T-cell (primary cell): ENCODE measurements at regions of chr2 and their contacts with region 1.

Region 1: DNA sequence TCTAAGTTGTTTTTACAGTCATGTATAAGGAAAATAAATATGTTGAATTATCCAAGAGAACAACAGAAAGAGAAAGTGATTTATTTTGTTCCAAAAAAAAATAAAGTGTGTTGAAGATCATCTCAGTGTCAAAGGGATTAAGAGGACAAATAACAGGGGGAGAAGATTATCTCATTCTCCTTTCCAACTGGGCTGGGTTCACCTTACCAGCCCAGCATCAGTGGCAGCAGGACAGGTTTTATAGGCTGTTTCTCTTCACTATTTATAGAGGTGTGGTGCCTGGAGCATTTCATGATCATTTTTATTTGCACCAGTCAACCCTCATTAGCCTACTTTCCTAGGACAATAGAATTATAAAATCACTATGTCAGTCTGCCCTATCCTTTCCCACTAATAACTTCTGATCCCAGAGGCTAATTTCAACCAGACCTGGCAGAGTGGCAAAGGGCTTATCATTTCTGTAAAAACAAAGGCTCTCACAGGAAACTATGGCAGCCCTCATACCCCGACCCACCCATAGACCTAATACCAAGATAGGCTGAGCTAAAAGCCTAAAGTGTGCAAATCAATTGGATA is 243.4 kb upstream of the TMEFF2 start:
- DNase-seq: no peak
- ATAC-seq: no peak
- H3K4me3 ChIP-seq: no peak overlapping the region
- H3K4me3 Mint-ChIP-seq: no peak overlapping the region
- H3K27ac ChIP-seq: no peak overlapping the region
- H3K27ac Mint-ChIP-seq: no peak overlapping the region
- H3K4me1 ChIP-seq: no peaks in the 10 kb centered on the region
- H3K4me1 Mint-ChIP-seq: no peaks in the 10 kb centered on the region
- H3K27me3 ChIP-seq: no peaks in the 10 kb centered on the region
- H3K27me3 Mint-ChIP-seq: no peaks in the 10 kb centered on the region

Region 2: GRCh38 chr2:192448881-192449280 is 10.7 kb after region 1 on chr2:
- CTCF ChIA-PET with region 1: no interaction called
- POLR2A ChIA-PET with region 1: no interaction called
- DNase-seq: no peak
- ATAC-seq: no peak
- H3K4me3 ChIP-seq: no peak overlapping the region
- H3K4me3 Mint-ChIP-seq: no peak overlapping the region
- H3K27ac ChIP-seq: no peak overlapping the region
- H3K27ac Mint-ChIP-seq: no peak overlapping the region
- H3K4me1 ChIP-seq: no peaks in the 10 kb centered on the region
- H3K4me1 Mint-ChIP-seq: no peaks in the 10 kb centered on the region
- H3K27me3 ChIP-seq: no peaks in the 10 kb centered on the region
- H3K27me3 Mint-ChIP-seq: no peaks in the 10 kb centered on the region

Region 3: DNA sequence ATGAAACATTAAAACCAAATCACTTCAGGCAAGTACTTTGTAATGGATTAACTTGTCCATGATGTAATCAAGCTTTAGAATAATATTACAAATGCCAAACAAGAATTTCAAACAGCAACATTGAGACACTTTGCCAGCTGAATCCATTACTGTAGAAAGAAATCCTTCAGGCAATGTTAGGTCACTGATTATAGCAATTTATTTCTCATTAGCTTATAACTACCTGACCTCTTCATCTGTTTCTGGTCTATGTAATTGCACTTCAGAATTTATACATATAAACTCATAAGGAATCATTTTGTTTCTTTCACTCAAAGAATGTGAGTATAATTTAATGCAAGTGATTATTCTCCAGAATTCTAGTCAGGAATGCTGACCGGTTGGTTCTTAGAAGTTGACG is 449.2 kb after region 1 on chr2:
- CTCF ChIA-PET with region 1: no interaction called
- POLR2A ChIA-PET with region 1: interaction called in 1 of 2 experiments, 16 read pairs
- DNase-seq: no peak
- ATAC-seq: no peak
- H3K4me3 ChIP-seq: no peak overlapping the region
- H3K4me3 Mint-ChIP-seq: no peak overlapping the region
- H3K27ac ChIP-seq: no peak overlapping the region
- H3K27ac Mint-ChIP-seq: no peak overlapping the region
- H3K4me1 ChIP-seq: no peaks in the 10 kb centered on the region
- H3K4me1 Mint-ChIP-seq: no peaks in the 10 kb centered on the region
- H3K27me3 ChIP-seq: no peaks in the 10 kb centered on the region
- H3K27me3 Mint-ChIP-seq: no peaks in the 10 kb centered on the region